HepG2 (cell line): ENCODE measurements at regions of chr9 and their contacts with region 1.

Region 1: GRCh38 chr9:69229367-69229766 is 55.3 kb downstream of the TJP2 start:
- DNase-seq: no peak
- ATAC-seq: no peak
- H3K4me3 ChIP-seq: no peak overlapping the region
- H3K27ac ChIP-seq: no peak overlapping the region
- H3K4me1 ChIP-seq: no peaks in the 10 kb centered on the region
- H3K27me3 ChIP-seq: no peaks in the 10 kb centered on the region
- CTCF ChIP-seq: no peak
- EP300 ChIP-seq: no peak
- POLR2A ChIP-seq: no peak
- RAD21 ChIP-seq: no peak

Region 2: DNA sequence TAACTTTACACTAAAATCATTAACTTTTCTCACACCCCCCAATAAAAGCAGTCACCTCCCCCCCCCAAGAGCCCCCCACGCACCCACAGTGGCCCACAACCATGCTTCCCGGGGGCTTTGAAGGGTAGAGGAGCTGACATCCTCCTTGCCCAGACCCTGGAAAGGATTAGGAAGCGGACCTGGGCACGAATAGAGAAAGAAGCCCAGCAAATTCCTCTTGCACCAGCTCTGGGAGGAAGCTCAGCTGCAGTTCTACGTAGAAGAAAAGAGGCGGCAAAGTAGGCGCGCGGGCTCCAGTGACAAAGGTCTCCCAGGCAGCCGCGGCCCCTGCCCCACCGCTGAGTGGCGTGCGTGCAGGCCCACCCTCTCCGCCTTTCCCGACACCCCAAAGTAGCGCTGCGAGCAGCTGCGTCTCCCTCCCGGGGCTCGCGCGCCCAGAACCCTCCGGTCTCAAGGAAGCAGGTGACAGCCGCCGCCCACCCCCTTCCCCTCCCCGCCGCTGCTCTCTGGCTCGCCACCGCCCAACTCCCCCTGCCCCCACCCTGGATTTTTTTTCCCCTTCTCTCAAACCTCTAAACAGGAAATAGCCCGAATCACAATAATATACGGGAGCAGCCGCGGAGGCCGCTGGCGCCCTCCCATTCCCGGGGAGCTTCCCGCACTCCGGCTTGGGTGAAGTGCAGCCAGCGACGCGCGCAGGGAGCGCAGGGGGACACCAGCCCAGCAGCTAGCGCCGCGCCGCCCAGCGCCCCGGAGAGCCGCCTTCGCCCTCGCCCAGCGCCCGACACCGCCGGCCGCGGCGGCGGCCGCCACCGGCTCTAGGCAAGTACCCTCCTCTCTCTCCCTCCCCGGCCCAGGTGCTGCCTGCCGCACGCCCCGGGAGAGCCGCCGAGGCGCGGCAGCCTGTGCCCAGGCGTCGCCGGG is 108.2 kb before region 1 on chr9:
- CTCF ChIA-PET with region 1: no interaction called
- POLR2A ChIA-PET with region 1: no interaction called
- in situ Hi-C with region 1: no loop called
- intact Hi-C with region 1: no loop called
- DNase-seq: peak; percentile 72
- ATAC-seq: peak; percentile 81
- H3K4me3 ChIP-seq: peak overlapping the region; percentile 75 to 92 (median 91)
- H3K27ac ChIP-seq: peak overlapping the region; percentile 99
- H3K4me1 ChIP-seq: peaks cover 29% of the 10 kb centered on the region
- H3K27me3 ChIP-seq: no peaks in the 10 kb centered on the region; a peak in 1 of 5 replicates
- CTCF ChIP-seq: peak; percentile 42
- EP300 ChIP-seq: no peak
- POLR2A ChIP-seq: no peak; a peak in 2 of 4 replicates
- RAD21 ChIP-seq: 0 out of 2 replicates have a peak, but pooled peaks have one; percentile 8

Region 3: DNA sequence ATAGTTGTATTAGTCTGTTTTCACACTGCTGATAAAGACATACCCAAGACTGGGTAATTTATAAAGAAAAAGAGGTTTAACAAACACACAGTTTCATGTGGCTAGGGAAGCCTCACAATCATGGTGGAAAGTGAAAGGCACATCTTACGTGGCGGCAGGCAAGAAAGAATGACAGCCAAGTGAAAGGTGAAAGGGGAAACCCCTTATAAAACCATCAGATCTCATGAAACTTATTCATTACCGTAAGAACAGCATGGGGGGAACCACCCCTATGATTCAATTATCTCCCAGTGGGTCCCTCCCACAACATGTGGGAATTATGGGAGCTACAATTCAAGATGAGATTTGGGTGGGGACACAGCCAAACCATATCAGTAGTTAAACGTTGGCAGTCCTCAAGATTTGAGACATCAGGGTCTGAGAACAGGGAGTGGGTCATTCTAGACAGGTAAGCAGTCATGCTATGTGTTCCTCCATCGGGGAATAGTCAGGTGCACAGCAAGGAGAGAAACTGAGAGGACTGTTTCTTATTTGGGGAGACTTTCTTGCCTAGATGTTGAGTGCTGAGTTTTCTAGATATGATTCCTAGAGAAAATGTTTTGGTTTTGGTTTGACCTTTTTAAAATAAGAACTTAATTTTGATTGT is 49.8 kb after region 1 on chr9:
- CTCF ChIA-PET with region 1: no interaction called
- POLR2A ChIA-PET with region 1: no interaction called
- in situ Hi-C with region 1: no loop called
- intact Hi-C with region 1: loop called (anchors 5 kb)
- DNase-seq: no peak
- ATAC-seq: no peak
- H3K4me3 ChIP-seq: no peak overlapping the region
- H3K27ac ChIP-seq: no peak overlapping the region
- H3K4me1 ChIP-seq: no peaks in the 10 kb centered on the region
- H3K27me3 ChIP-seq: no peaks in the 10 kb centered on the region; a peak in 1 of 5 replicates
- CTCF ChIP-seq: no peak
- EP300 ChIP-seq: no peak
- POLR2A ChIP-seq: no peak
- RAD21 ChIP-seq: no peak

Region 4: DNA sequence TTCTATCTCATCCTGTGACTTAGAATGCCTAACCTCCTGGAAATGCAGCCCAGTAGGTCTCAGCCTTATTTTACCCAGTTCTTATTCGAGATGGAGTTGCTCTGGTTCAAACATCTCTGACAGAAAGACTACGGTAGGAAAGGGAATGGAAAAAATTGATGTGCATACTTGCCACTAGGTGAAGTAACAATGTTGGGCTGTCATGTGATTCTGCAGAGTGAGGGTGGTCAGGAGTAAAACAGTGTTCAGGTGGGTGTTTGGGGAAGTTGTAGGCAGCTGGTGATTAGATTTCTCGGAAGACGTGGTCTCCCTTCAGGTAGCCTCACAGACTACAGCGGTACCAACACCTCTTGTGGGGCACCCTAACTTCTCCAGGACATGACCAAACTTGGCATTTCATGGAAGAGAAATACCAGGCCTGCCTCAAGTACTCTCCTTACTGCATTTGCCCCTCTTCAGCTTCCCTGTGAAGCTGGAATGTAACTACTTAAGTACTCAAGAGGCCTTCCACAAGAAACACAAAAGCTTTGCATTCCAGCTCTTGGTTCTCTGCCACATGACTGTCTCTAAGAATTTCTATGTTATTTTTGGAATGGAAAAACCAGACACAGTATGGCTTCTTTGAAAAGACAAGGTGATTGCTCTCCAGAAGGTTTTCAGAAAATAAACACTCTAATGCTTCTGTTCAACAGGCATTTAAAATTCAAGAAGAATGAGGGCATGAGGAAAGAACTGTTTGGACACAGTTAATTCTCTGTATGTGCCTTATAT is 78.3 kb after region 1 on chr9:
- CTCF ChIA-PET with region 1: no interaction called
- POLR2A ChIA-PET with region 1: no interaction called
- in situ Hi-C with region 1: no loop called
- intact Hi-C with region 1: no loop called
- DNase-seq: no peak
- ATAC-seq: no peak
- H3K4me3 ChIP-seq: no peak overlapping the region
- H3K27ac ChIP-seq: no peak overlapping the region
- H3K4me1 ChIP-seq: peaks cover 12% of the 10 kb centered on the region; the same call in 1 of the 2 replicates
- H3K27me3 ChIP-seq: no peaks in the 10 kb centered on the region; a peak in 1 of 5 replicates
- CTCF ChIP-seq: no peak
- EP300 ChIP-seq: no peak
- POLR2A ChIP-seq: no peak
- RAD21 ChIP-seq: no peak